ENCODE measurements at regions of chr7 and their contacts with region 1.

Region 1: DNA sequence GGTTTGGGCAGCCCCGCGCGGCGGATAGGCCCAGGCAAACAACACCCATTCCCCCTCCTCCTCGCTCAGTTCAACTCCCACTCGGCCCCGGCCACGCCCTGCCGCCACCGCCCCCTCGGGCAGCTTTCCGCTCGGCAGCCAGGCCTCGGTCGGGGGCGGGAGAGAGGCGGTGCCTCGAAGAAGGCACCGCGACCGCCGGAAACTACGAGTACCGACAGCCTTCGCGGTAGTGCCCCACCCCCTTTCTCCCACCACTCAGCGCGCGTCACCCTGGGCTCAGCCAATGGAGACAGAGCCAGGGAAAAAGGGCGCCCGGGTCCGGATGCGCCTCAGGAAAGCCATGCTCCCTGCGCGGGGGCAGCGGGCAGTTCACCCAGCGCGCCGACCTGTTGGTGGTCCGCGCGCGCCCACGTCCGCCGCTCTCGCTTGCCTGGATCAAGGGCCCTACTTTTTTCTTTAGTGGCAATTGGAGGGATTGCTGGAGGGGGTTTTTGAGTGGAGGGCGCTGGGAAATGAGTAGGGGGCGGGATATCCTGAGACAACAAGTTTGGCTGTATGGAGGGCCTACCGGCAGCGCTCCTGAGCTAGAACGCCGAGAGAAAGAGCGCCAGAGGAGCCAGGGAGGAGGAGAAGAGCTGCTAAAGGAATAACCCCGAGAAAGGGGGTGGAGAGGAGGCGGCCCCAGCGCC is 557 bp upstream of the SP4 start:
- DNase-seq: peak; percentile 99
- ATAC-seq: peak; percentile 80
- H3K4me3 Mint-ChIP-seq: peak overlapping the region; percentile 99
- H3K27ac Mint-ChIP-seq: peak overlapping the region; percentile 100
- H3K4me1 Mint-ChIP-seq: peaks cover 38% of the 10 kb centered on the region
- H3K27me3 Mint-ChIP-seq: no peaks in the 10 kb centered on the region

Region 2: GRCh38 chr7:21011118-21011517 is 416.2 kb before region 1 on chr7:
- CTCF ChIA-PET with region 1: no interaction called
- POLR2A ChIA-PET with region 1: no interaction called
- intact Hi-C with region 1: no loop called
- DNase-seq: no peak
- ATAC-seq: no peak
- H3K4me3 Mint-ChIP-seq: no peak overlapping the region
- H3K27ac Mint-ChIP-seq: no peak overlapping the region
- H3K4me1 Mint-ChIP-seq: no peaks in the 10 kb centered on the region
- H3K27me3 Mint-ChIP-seq: no peaks in the 10 kb centered on the region

Region 3: GRCh38 chr7:21253740-21254687 is 173.3 kb before region 1 on chr7:
- CTCF ChIA-PET with region 1: interaction called, 3 read pairs
- POLR2A ChIA-PET with region 1: no interaction called
- intact Hi-C with region 1: loop called in 1 of 2 experiments (anchors 5 kb)
- DNase-seq: peak; percentile 65
- ATAC-seq: peak; percentile 81
- H3K4me3 Mint-ChIP-seq: no peak overlapping the region
- H3K27ac Mint-ChIP-seq: no peak overlapping the region
- H3K4me1 Mint-ChIP-seq: no peaks in the 10 kb centered on the region
- H3K27me3 Mint-ChIP-seq: peaks cover 46% of the 10 kb centered on the region

Region 4: DNA sequence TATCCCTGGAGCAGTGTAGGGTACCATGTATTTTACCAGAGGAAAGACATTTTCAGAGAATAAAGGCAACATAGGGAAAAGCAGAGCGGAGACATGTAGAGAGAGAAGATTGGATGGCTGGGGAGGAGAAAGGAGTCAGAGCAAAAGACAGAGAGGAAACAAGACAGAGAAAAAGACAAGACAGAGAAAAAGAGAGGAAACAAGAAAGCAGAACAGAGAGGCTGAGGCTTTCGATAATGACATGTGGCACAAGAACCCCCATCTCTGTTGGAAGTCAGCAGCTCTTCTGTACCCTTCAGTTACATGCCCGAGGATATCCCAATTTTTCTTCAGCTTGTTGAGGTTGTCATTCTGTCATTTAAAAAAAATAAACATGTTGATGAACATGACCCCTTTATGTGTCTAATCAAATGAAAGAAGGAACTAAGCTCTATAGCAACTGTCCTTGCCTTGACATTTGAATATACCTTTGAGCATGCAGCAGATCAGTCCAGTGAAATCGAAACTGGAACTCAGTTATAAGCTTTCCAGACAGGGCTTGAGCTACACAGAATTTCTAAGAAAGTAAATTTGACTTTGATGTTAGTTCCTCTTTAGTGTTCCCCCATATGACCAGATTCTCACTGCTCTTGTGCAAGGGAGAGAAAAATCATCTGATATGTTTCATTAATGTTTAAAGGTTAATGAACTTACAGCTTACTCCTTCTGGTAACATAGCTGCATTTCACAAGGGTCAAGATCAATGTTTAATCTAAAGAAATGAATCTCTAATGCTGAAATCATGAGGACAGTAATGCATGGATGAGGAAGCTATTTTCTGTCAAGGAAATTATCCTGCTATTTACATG is 74.6 kb before region 1 on chr7:
- CTCF ChIA-PET with region 1: no interaction called
- POLR2A ChIA-PET with region 1: interaction called, 5 read pairs
- intact Hi-C with region 1: loop called (anchors 1 kb)
- DNase-seq: no peak
- ATAC-seq: peak; percentile 86
- H3K4me3 Mint-ChIP-seq: peak overlapping the region; percentile 30
- H3K27ac Mint-ChIP-seq: peak overlapping the region; percentile 66
- H3K4me1 Mint-ChIP-seq: peaks cover 52% of the 10 kb centered on the region
- H3K27me3 Mint-ChIP-seq: peaks cover 2% of the 10 kb centered on the region

Region 5: GRCh38 chr7:21945454-21946227 is 518.3 kb after region 1 on chr7 and contains the start of gene CDCA7L:
- CTCF ChIA-PET with region 1: no interaction called
- POLR2A ChIA-PET with region 1: interaction called, 9 read pairs
- intact Hi-C with region 1: loop called in 1 of 2 experiments (anchors 1 kb)
- DNase-seq: peak; percentile 89
- ATAC-seq: peak; percentile 87
- H3K4me3 Mint-ChIP-seq: peak within 1 kb of the TSS; percentile 82
- H3K27ac Mint-ChIP-seq: peak within 1 kb of the TSS; percentile 85
- H3K4me1 Mint-ChIP-seq: peaks cover 60% of the 10 kb centered on the region
- H3K27me3 Mint-ChIP-seq: peaks cover 4% of the 10 kb centered on the region
- total RNA-seq, gene CDCA7L: 86.9 to 92.1 TPM

Region 6: GRCh38 chr7:23105644-23106056 is 1678.3 kb after region 1 on chr7 and contains the start of gene KLHL7:
- CTCF ChIA-PET with region 1: no interaction called
- POLR2A ChIA-PET with region 1: no interaction called
- intact Hi-C with region 1: loop called in 1 of 2 experiments (anchors 5 kb)
- DNase-seq: peak; percentile 98
- ATAC-seq: peak; percentile 98
- H3K4me3 Mint-ChIP-seq: peak within 1 kb of the TSS; percentile 97
- H3K27ac Mint-ChIP-seq: peak within 1 kb of the TSS; percentile 94
- H3K4me1 Mint-ChIP-seq: peaks cover 32% of the 10 kb centered on the region
- H3K27me3 Mint-ChIP-seq: no peaks in the 10 kb centered on the region
- total RNA-seq, gene KLHL7: 18.1 to 20.8 TPM